Mucosa of descending colon (tissue), 3 donors: ENCODE measurements at regions of chr2 and their contacts with region 1.

Region 1: DNA sequence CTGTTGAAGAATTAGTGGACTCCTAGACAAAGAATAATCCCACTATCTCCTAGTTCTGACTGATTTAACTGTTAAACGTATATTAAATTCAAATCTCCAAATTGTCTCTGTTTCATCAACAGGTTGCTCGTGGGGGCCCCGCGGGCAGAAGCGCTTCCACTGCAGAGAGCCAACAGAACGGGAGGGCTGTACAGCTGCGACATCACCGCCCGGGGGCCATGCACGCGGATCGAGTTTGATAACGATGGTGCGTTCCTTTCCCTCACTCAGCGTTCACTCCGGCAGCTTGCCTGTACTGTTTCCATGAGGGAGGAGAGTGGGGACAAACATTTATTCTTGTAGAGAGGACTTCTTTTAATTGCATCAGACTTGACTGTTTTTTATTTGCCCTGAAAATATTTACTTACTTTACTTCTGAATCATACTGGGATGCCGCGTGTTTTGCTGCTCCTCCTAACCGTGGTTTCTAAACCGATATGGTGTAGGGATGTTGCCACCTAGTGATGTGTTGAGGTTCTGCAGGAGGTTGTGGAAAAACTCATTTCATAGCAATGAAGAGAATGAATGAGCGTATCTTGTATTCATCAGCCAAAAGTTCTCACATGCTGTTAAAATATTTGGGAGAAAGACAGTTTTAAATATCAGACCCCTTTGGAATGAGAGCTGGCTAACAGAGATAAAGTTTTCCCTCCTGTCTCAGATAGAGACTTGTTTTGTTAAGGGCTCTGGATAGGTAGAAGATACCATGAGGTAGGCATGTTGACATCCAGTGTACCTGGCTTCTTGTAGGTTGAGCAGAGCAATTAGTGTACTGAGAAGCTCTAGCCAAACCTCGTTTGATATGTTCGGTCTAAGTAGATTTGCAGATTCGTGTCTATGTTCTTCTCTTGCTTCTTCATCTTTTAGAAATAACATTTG is 38.3 kb downstream of the ITGA6 start:
- DNase-seq: peak; percentile 64 to 91 (median 67)
- ATAC-seq: peak; percentile 61
- H3K4me3 ChIP-seq: no peak overlapping the region
- H3K4me1 ChIP-seq: peaks cover 43% of the 10 kb centered on the region
- CTCF ChIP-seq: peak; percentile 65

Region 2: GRCh38 chr2:172172513-172173173 is 293.0 kb before region 1 on chr2:
- intact Hi-C with region 1: loop called (anchors 5 kb)
- DNase-seq: peak; percentile 86 to 91 (median 87)
- ATAC-seq: peak; percentile 98
- H3K4me3 ChIP-seq: no peak overlapping the region
- H3K4me1 ChIP-seq: peaks cover 18% of the 10 kb centered on the region
- CTCF ChIP-seq: peak; percentile 70

Region 3: GRCh38 chr2:172427256-172427989 is 38.3 kb before region 1 on chr2 and contains the start of gene ITGA6:
- intact Hi-C with region 1: loop called in 1 of 2 experiments (anchors 5 kb)
- DNase-seq: peak; percentile 91 to 94 (median 93)
- ATAC-seq: peak; percentile 79
- H3K4me3 ChIP-seq: peak within 1 kb of the TSS; percentile 75
- H3K4me1 ChIP-seq: peaks cover 27% of the 10 kb centered on the region
- CTCF ChIP-seq: peak; percentile 44
- total RNA-seq, gene ITGA6: 116 to 192 (median 178) TPM